HCT116 (cell line): ENCODE measurements at regions of chr9 and their contacts with region 1.

Region 1: GRCh38 chr9:14238552-14238951 is 75.4 kb downstream of the NFIB start:
- DNase-seq: no peak
- ATAC-seq: peak; percentile 86
- H3K4me3 ChIP-seq: 0 out of 4 replicates have a peak overlapping the region, but pooled peaks of 1 of the 2 experiments have one; percentile 12
- H3K27ac ChIP-seq: peak overlapping the region; percentile 21; the same call in 1 of the 2 replicates
- H3K4me1 ChIP-seq: peaks cover 6 to 16% of the 10 kb centered on the region in 2 experiments; a peak in 3 of 4 replicates
- H3K27me3 ChIP-seq: no peaks in the 10 kb centered on the region
- CTCF ChIP-seq: no peak
- POLR2A ChIP-seq: no peak
- RAD21 ChIP-seq: no peak

Region 2: GRCh38 chr9:14179449-14179848 is 59.1 kb before region 1 on chr9:
- CTCF ChIA-PET with region 1: no interaction called
- POLR2A ChIA-PET with region 1: no interaction called
- RAD21 ChIA-PET with region 1: no interaction called
- intact Hi-C with region 1: loop called (anchors 5 kb)
- DNase-seq: peak; percentile 26
- ATAC-seq: peak; percentile 38; the same call in 1 of the 2 replicates
- H3K4me3 ChIP-seq: no peak overlapping the region
- H3K27ac ChIP-seq: peak overlapping the region; percentile 11; the same call in 1 of the 2 replicates
- H3K4me1 ChIP-seq: peaks cover 0 to 22% of the 10 kb centered on the region in 2 experiments; a peak in 2 of 4 replicates
- H3K27me3 ChIP-seq: no peaks in the 10 kb centered on the region
- CTCF ChIP-seq: no peak
- POLR2A ChIP-seq: no peak
- RAD21 ChIP-seq: no peak

Region 3: GRCh38 chr9:14213504-14213903 is 25.0 kb before region 1 on chr9:
- CTCF ChIA-PET with region 1: no interaction called
- POLR2A ChIA-PET with region 1: no interaction called
- RAD21 ChIA-PET with region 1: no interaction called
- intact Hi-C with region 1: loop called (anchors 1 kb)
- DNase-seq: no peak
- ATAC-seq: no peak
- H3K4me3 ChIP-seq: no peak overlapping the region
- H3K27ac ChIP-seq: no peak overlapping the region
- H3K4me1 ChIP-seq: no peaks in the 10 kb centered on the region; a peak in 2 of 4 replicates
- H3K27me3 ChIP-seq: no peaks in the 10 kb centered on the region
- CTCF ChIP-seq: no peak
- POLR2A ChIP-seq: no peak
- RAD21 ChIP-seq: no peak